GM10248 (cell line): ENCODE measurements at regions of chr11 and their contacts with region 1.

Region 1: DNA sequence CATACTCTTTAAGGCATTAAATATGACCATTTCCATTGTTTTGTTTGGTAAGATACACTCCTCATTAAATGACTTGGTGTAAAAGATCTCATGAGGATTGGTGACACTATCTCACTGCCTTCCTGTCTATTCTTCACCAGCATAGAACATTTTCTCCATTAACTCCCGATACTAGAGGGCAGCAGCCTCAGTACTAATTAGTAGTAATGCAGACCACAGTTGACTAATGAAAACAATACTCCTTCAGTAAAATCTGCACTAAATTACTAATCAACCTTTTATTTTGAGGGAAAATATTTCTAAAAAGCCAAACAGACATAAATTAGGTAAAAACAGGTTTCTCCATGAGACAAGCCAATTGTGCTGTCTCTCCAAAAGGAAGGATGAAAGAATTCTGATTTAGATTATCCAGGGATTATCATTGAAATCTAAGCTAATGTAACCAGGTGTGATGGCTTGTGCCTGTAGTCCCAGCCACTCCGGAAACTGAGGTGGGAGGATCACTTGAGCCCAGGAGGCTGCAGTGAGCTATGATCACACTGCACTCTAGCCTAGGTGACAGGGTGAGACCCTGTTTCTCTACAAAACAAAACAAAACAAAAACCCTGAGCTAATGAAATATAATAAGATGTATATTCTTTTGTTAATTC is 9.4 kb downstream of the PGM2L1 start:
- DNase-seq: peak; percentile 50
- CTCF ChIP-seq: peak; percentile 80

Region 2: GRCh38 chr11:74371279-74372049 is 17.3 kb before region 1 on chr11:
- CTCF ChIA-PET with region 1: interaction called, 13 read pairs
- POLR2A ChIA-PET with region 1: no interaction called
- DNase-seq: no peak
- CTCF ChIP-seq: no peak

Region 3: DNA sequence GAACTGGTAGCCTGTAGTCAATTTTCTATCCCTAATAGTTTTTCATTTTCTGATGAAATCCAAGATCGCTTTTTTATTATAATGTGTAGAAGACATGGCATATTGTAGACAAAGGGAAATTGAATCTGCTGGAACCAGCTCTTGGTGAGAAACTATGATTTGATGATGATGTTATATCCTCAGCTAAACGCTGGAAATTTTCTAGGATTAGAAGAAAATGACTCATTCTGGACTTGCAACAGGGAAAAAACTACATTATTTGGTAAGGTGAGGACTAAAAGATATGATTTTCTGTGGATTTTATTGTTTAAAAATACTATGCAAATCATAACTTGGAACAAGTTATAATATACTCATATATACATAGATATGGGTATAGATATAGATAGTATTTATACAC is 23.5 kb after region 1 on chr11:
- CTCF ChIA-PET with region 1: interaction called, 17 read pairs
- POLR2A ChIA-PET with region 1: no interaction called
- DNase-seq: no peak
- CTCF ChIP-seq: no peak

Region 4: GRCh38 chr11:74443071-74443864 is 54.5 kb after region 1 on chr11:
- CTCF ChIA-PET with region 1: interaction called, 136 read pairs
- POLR2A ChIA-PET with region 1: no interaction called
- DNase-seq: no peak
- CTCF ChIP-seq: no peak

Region 5: DNA sequence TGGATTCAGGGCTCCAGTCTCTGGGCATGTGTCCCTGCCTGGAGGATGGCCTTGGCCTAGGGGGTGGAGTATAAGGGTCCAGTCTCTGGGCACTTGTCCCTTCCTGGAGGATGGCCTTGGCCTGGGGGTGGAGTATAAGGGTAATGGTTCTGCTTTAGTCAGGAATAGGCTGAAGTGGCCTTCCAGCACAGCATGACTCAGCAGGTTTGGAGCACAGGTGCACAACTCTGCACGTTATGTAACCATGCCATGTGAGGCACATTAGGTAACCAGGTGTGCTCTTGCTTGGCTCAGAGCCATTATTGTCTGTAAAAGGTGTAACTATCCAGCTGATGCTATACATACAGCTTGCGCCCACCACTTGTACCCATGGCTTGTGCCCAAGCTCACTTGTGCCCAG is 155.2 kb after region 1 on chr11:
- CTCF ChIA-PET with region 1: no interaction called
- POLR2A ChIA-PET with region 1: no interaction called
- DNase-seq: no peak
- CTCF ChIP-seq: no peak

Region 6: GRCh38 chr11:74570266-74571061 is 181.7 kb after region 1 on chr11:
- CTCF ChIA-PET with region 1: interaction called, 11 read pairs
- POLR2A ChIA-PET with region 1: no interaction called
- DNase-seq: peak; percentile 57
- CTCF ChIP-seq: peak; percentile 67